PC-3 (cell line): ENCODE measurements at regions of chr2 and their contacts with region 1.

Region 1: DNA sequence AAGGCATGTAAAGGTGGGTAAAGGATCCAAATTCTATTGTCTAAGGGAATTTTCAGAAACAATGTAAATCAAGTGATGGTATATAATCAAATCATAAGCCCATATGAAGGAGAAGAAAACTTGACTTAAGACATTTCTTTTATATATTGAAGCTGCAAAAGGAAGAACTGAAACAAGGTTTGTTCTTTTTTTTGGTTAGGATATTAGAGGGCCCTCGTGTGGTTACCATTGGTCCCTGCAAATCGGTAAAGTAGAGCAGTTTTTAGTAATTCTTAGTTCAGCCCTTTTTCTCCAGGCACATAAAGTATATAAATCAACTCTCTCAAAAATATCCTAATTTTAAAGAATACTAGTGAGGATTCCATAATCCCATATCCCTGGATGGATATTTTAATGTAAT is 105.6 kb upstream of the STK17B start:
- DNase-seq: peak; percentile 59
- ATAC-seq: no peak
- H3K4me3 ChIP-seq: no peak overlapping the region
- H3K27ac ChIP-seq: no peak overlapping the region; the same call in 1 of the 2 replicates
- H3K4me1 ChIP-seq: peaks cover 30% of the 10 kb centered on the region
- H3K27me3 ChIP-seq: no peaks in the 10 kb centered on the region
- CTCF ChIP-seq: peak; percentile 86

Region 2: GRCh38 chr2:196131384-196131937 is 145.5 kb before region 1 on chr2:
- CTCF ChIA-PET with region 1: no interaction called
- POLR2A ChIA-PET with region 1: no interaction called
- intact Hi-C with region 1: loop called (anchors 2 kb)
- DNase-seq: peak; percentile 71
- ATAC-seq: peak; percentile 65
- H3K4me3 ChIP-seq: no peak overlapping the region
- H3K27ac ChIP-seq: no peak overlapping the region
- H3K4me1 ChIP-seq: no peaks in the 10 kb centered on the region
- H3K27me3 ChIP-seq: no peaks in the 10 kb centered on the region
- CTCF ChIP-seq: peak; percentile 72

Region 3: GRCh38 chr2:196233021-196233804 is 43.8 kb before region 1 on chr2:
- CTCF ChIA-PET with region 1: no interaction called
- POLR2A ChIA-PET with region 1: interaction called, 3 read pairs
- intact Hi-C with region 1: loop called (anchors 2 kb)
- DNase-seq: peak; percentile 97
- ATAC-seq: peak; percentile 96
- H3K4me3 ChIP-seq: peak overlapping the region; percentile 13; the same call in 1 of the 2 replicates
- H3K27ac ChIP-seq: peak overlapping the region; percentile 77
- H3K4me1 ChIP-seq: peaks cover 26% of the 10 kb centered on the region
- H3K27me3 ChIP-seq: no peaks in the 10 kb centered on the region
- CTCF ChIP-seq: no peak

Region 4: GRCh38 chr2:196239622-196240587 is 37.1 kb before region 1 on chr2:
- CTCF ChIA-PET with region 1: interaction called, 3 read pairs
- POLR2A ChIA-PET with region 1: no interaction called
- intact Hi-C with region 1: loop called (anchors 1 kb)
- DNase-seq: peak; percentile 97
- ATAC-seq: peak; percentile 97
- H3K4me3 ChIP-seq: peak overlapping the region; percentile 25; the same call in 1 of the 2 replicates
- H3K27ac ChIP-seq: peak overlapping the region; percentile 94
- H3K4me1 ChIP-seq: peaks cover 25% of the 10 kb centered on the region
- H3K27me3 ChIP-seq: no peaks in the 10 kb centered on the region
- CTCF ChIP-seq: 0 out of 2 replicates have a peak, but pooled peaks have one; percentile 33

Region 5: GRCh38 chr2:196263181-196263747 is 13.7 kb before region 1 on chr2:
- CTCF ChIA-PET with region 1: no interaction called
- POLR2A ChIA-PET with region 1: no interaction called
- intact Hi-C with region 1: no loop called
- DNase-seq: peak; percentile 9
- ATAC-seq: no peak
- H3K4me3 ChIP-seq: no peak overlapping the region
- H3K27ac ChIP-seq: no peak overlapping the region
- H3K4me1 ChIP-seq: peaks cover 28% of the 10 kb centered on the region
- H3K27me3 ChIP-seq: no peaks in the 10 kb centered on the region
- CTCF ChIP-seq: no peak